ENCODE measurements at regions of chr16 and their contacts with region 1.

Region 1: GRCh38 chr16:78770353-78771091 is 671.1 kb downstream of the WWOX start:
- DNase-seq: peak; percentile 93

Region 2: DNA sequence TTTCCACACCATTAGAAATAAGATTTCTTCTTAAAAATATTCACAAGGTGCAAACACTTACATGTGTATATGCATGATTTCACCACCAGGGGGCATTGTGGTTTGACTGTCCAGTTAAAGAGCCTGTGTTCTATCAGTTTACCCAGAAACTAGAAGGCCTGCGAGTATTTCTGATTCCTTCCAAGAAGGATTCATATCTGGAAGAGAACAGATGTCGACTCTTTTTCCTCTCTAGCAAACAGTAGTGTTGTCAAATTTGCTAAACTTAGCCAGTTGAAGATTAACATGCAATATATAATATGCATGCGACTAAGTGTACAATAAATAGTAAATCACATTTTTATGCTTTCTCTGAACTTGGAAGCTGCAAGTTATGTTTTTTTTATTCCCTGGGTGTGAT is 266.9 kb before region 1 on chr16:
- intact Hi-C with region 1: loop called in 1 of 2 experiments (anchors 10 kb)
- DNase-seq: no peak

Region 3: GRCh38 chr16:78619811-78620210 is 150.7 kb before region 1 on chr16:
- intact Hi-C with region 1: no loop called
- DNase-seq: no peak

Measured in posterior vena cava (tissue), 2 donors.